Left ventricle myocardium superior (tissue), 1 donor: ENCODE measurements at regions of chr4 and their contacts with region 1.

Region 1: DNA sequence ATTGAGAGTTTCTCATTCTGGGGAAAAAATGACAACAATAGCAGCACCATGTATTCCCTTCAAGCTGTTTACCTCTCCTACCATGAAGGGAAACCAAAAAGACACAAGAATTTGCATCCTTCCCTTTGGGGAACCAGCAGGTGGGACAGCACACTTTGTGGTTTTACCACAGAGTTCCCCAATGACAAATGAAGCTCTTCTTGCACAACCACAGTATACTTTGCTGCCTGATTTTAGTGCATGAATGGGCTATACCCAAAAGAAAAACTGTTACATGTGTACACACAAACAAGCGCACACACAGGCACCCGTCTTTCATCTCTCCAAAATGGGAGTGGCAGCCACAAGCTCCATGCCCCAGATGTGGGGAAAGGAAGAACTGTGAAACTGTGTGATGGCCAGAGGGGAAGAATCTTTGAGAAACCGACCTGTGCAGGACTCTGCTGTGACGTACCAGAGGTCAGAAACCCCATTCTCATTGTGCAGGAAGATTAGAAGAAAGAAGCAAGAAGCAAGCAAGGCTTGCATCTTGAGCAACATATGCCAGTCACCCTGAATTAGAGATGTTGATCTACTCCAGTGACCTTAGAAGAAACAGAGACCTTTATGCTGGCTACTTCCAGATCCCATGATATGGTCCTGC is 2.7 kb upstream of the MAML3 start:
- DNase-seq: no peak
- ATAC-seq: no peak

Region 2: DNA sequence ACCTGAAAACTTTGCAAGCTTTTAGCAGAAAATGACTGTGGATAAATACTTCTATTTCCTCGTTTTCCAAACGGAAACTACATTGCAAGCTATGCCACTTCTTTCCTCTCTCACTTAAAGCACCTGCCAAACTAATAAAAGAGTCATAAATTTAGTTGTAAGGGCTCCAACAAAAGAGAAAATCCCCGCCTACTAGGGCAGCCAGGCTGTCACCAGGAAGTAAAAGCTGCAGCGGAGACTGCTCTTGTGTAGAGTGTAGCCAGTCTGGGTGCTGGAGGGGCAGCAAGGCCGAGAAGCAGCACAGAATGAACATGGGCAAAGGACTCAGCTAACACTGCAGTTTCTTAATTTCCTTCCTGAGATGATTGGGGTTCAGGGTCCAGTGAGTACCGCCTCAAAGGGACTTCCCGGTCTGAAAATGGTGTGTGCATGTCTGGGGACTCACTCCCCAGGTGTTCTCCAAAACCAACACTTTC is 86.7 kb after region 1 on chr4:
- intact Hi-C with region 1: loop called (anchors 5 kb)
- DNase-seq: peak; percentile 31
- ATAC-seq: no peak